ENCODE measurements at regions of chr13 and their contacts with region 1.

Region 1: DNA sequence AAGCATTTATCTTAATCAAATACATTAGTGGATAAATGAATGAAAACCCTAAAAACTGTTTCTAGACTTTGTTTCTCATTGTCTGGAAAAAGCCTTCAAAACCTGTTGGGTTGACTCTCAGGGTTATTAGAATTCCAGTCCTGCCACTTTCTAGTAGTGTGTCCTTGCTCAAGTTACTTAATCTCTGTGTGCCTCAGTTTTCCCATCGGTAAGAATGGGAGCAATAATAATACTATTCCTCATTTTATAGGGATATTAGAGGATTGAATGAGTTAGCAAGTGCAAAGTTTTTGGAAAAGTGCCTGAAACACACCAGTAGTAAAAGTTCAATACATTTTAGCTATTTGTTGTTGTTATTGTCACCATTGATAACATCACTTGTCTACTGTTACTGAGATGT is 2.9 kb downstream of the URAD start:
- DNase-seq: no peak
- CTCF ChIP-seq: no peak

Region 2: GRCh38 chr13:27997904-27998522 is 12.4 kb after region 1 on chr13:
- CTCF ChIA-PET with region 1: interaction called, 28 read pairs
- POLR2A ChIA-PET with region 1: no interaction called
- DNase-seq: peak; percentile 51
- CTCF ChIP-seq: peak; percentile 61

Region 3: GRCh38 chr13:28012896-28013295 is 27.3 kb after region 1 on chr13:
- CTCF ChIA-PET with region 1: interaction called, 16 read pairs
- POLR2A ChIA-PET with region 1: no interaction called
- DNase-seq: peak; percentile 69
- CTCF ChIP-seq: no peak